ENCODE measurements at regions of chr17 and their contacts with region 1.

Region 1: DNA sequence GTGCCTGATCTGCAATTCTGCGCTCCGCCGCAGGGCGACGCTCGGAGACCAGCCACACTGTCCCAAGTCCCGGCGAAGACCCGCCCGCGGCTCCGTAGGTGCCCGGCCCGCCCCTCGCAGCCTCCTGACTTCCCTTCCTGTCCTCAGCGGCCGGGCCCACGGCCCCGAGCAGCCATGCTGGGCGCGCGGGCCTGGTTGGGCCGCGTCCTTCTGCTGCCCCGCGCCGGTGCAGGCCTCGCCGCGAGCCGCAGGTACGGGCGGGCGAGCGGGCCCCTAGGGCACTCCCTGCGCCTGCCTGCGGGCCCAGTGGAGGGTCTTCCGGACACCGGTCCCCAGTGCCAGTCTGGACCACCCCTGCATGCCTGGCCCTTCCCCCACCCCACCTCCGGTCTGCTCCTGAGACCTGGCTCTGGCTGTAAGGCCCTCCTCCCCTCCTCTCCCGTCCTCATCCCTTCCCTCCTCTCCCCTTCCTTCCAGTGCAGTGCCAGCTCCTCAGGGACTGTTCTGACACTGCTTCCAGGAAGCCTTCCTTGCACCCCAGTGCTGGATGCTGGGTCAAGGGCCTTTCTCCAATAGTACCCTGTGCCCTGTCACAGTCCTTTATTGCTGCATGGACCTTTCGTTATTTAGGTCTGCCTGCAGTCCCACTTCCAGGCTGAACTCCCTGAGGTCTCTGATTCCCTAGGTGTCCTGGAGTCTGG is at the start of gene SPATA20:
- DNase-seq: peak; percentile 82
- H3K4me3 ChIP-seq: peak within 1 kb of the TSS; percentile 37 to 56 (median 55)
- H3K27ac ChIP-seq: peak within 1 kb of the TSS; percentile 23
- H3K4me1 ChIP-seq: peaks cover 21% of the 10 kb centered on the region
- H3K27me3 ChIP-seq: no peaks in the 10 kb centered on the region
- CTCF ChIP-seq: peak; percentile 95 to 99
- total RNA-seq, gene SPATA20: 65.6 to 79.9 TPM

Region 2: DNA sequence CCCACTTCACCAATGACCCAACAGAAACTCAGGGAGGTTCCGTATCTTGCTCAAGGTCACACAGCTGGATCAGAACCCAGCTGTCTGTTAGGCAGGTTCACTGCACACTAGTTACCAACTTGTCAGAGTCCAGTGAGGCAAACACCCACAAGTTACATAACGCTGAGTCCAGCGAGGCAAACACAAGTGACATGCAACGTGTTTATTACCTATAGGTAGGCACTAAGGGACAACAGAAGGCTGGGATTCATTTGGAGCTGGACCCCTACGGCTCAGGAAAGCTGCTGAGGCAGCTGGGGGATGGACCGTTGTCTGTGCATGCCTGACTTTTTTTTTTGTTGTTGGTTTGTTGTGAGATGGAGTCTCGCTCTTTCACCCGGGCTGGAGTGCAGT is 70.6 kb before region 1 on chr17:
- CTCF ChIA-PET with region 1: no interaction called
- dilution Hi-C with region 1: no loop called
- in situ Hi-C with region 1: no loop called
- intact Hi-C with region 1: no loop called
- DNase-seq: no peak
- H3K4me3 ChIP-seq: no peak overlapping the region
- H3K27ac ChIP-seq: no peak overlapping the region
- H3K4me1 ChIP-seq: peaks cover 20% of the 10 kb centered on the region
- H3K27me3 ChIP-seq: no peaks in the 10 kb centered on the region
- CTCF ChIP-seq: no peak

Region 3: GRCh38 chr17:50681263-50682210 is 134.4 kb after region 1 on chr17:
- CTCF ChIA-PET with region 1: no interaction called
- dilution Hi-C with region 1: no loop called
- in situ Hi-C with region 1: no loop called
- intact Hi-C with region 1: loop called (anchors 1 kb)
- DNase-seq: no peak
- H3K4me3 ChIP-seq: no peak overlapping the region
- H3K27ac ChIP-seq: no peak overlapping the region
- H3K4me1 ChIP-seq: peaks cover 6% of the 10 kb centered on the region
- H3K27me3 ChIP-seq: no peaks in the 10 kb centered on the region
- CTCF ChIP-seq: peak; percentile 20 to 59

Region 4: GRCh38 chr17:50689956-50690886 is 143.0 kb after region 1 on chr17:
- CTCF ChIA-PET with region 1: no interaction called
- dilution Hi-C with region 1: no loop called
- in situ Hi-C with region 1: loop called (anchors 10 kb)
- intact Hi-C with region 1: loop called (anchors 1 kb)
- DNase-seq: peak; percentile 66
- H3K4me3 ChIP-seq: no peak overlapping the region
- H3K27ac ChIP-seq: no peak overlapping the region
- H3K4me1 ChIP-seq: peaks cover 33% of the 10 kb centered on the region
- H3K27me3 ChIP-seq: no peaks in the 10 kb centered on the region
- CTCF ChIP-seq: no peak

Region 5: GRCh38 chr17:50841949-50842354 is 294.8 kb after region 1 on chr17:
- CTCF ChIA-PET with region 1: no interaction called
- dilution Hi-C with region 1: no loop called
- in situ Hi-C with region 1: loop called in 1 of 2 experiments (anchors 10 kb)
- intact Hi-C with region 1: loop called (anchors 1 kb)
- DNase-seq: peak; percentile 51
- H3K4me3 ChIP-seq: no peak overlapping the region
- H3K27ac ChIP-seq: no peak overlapping the region
- H3K4me1 ChIP-seq: peaks cover 28% of the 10 kb centered on the region
- H3K27me3 ChIP-seq: no peaks in the 10 kb centered on the region
- CTCF ChIP-seq: peak; percentile 86 to 92